SK-N-SH (cell line): ENCODE measurements at regions of chr2 and their contacts with region 1.

Region 1: GRCh38 chr2:200471324-200471848 is 38.5 kb downstream of the KCTD18 start:
- DNase-seq: peak; percentile 71
- H3K4me3 ChIP-seq: no peak overlapping the region
- H3K27ac ChIP-seq: no peak overlapping the region
- H3K4me1 ChIP-seq: peaks cover 0 to 11% of the 10 kb centered on the region in 2 experiments; a peak in 1 of 4 replicates
- H3K27me3 ChIP-seq: no peaks in the 10 kb centered on the region
- CTCF ChIP-seq: peak; percentile 61
- EP300 ChIP-seq: no peak
- RAD21 ChIP-seq: peak; percentile 87

Region 2: GRCh38 chr2:199903111-199903510 is 568.3 kb before region 1 on chr2:
- CTCF ChIA-PET with region 1: no interaction called
- POLR2A ChIA-PET with region 1: no interaction called
- DNase-seq: no peak
- H3K4me3 ChIP-seq: no peak overlapping the region
- H3K27ac ChIP-seq: no peak overlapping the region
- H3K4me1 ChIP-seq: no peaks in the 10 kb centered on the region
- H3K27me3 ChIP-seq: no peaks in the 10 kb centered on the region
- CTCF ChIP-seq: no peak
- EP300 ChIP-seq: no peak
- RAD21 ChIP-seq: no peak

Region 3: DNA sequence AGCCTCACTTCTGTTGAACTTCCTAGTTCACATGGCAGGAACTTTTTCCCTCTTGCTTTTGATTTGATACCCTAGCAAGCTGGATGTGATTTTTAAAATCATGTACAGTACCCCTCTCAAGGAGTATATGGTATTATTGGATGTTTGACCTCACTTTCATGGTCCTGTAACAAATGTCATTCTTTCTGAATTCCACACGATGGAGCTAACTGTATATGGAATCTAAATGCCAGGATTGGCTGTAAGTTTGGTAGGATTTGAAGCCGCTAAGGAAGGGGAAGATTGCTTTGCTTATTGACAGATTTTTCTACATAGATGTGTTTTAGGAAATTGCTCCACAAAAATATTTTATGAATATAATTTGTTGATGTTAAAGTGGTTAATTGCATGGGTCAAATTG is 497.7 kb before region 1 on chr2:
- CTCF ChIA-PET with region 1: interaction called, 39 read pairs
- POLR2A ChIA-PET with region 1: no interaction called
- DNase-seq: peak; percentile 40
- H3K4me3 ChIP-seq: no peak overlapping the region
- H3K27ac ChIP-seq: no peak overlapping the region
- H3K4me1 ChIP-seq: peaks cover 3 to 7% of the 10 kb centered on the region in 2 experiments; a peak in 2 of 4 replicates
- H3K27me3 ChIP-seq: no peaks in the 10 kb centered on the region
- CTCF ChIP-seq: peak; percentile 72
- EP300 ChIP-seq: no peak
- RAD21 ChIP-seq: peak; percentile 91

Region 4: DNA sequence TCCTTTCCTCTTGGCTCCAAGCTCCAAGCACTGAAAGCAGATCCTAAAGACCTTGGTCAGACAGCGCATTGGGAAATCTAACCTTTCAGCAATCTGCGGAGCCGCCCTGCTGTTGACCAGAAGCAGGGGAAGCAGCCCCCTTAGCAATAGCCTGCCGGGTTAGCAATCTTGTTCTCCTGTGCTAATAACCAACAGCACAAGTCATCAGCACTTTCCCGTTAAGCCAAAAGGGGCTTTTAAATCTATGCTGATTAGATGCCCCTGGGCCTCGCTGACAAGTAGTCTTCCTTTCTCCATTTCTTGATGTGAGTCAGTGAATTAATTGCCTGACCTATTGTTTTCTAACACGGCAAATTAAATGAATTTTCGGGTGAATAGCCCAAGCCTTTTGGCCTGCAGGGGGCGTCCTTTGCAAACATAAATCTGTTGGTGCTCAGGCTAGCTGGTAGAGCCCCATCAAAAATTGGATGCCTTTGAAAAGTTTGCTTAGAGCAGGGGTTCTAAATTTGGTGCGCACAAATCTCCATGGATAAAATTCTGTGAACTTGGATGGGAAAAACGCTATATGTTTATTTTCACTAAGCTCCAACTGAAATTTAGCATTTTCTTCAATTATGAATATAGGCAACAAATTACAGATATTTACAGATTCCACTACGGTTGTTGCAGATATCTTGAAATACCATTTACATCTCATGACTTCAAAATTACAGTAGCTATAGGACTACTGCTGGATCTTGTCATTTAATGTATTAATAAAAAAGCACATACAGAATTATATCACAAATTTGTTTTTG is 491.4 kb before region 1 on chr2:
- CTCF ChIA-PET with region 1: interaction called, 57 read pairs
- POLR2A ChIA-PET with region 1: no interaction called
- DNase-seq: peak; percentile 52
- H3K4me3 ChIP-seq: peak overlapping the region; percentile 12 to 13; a peak in 2 of 4 replicates
- H3K27ac ChIP-seq: no peak overlapping the region
- H3K4me1 ChIP-seq: peaks cover 8% of the 10 kb centered on the region in 2 experiments; a peak in 3 of 4 replicates
- H3K27me3 ChIP-seq: no peaks in the 10 kb centered on the region
- CTCF ChIP-seq: peak; percentile 98
- EP300 ChIP-seq: 0 out of 4 replicates have a peak, but pooled peaks of 1 of the 2 experiments have one; percentile 3
- RAD21 ChIP-seq: peak; percentile 93

Region 5: DNA sequence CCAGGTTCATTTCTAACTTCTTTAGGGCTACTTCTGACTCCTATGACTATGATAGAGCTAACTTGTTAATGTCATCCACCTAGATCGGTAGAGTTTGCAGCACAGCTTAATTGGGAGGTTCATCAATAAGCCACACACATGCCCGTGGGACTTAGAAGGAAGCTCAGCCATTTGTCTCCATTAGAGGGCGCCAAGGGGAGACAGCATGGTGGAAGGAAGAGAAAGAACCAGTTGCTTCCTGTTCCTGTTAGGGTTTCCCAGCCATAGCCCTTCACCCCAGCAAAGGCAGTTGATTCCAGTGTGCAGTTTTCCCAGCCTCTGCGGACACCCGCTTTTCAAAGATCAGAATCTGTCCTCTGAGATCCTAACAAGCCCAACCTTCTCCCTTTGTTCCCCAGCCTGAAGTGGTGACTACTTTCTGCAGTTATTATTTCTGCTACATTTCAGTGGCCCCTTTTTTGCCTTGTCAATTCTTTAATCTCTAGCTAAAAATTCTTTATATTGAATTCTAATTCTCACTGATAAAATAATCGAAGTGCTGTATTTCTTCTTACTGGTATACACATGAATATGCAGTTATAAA is 485.7 kb before region 1 on chr2:
- CTCF ChIA-PET with region 1: interaction called, 57 read pairs
- POLR2A ChIA-PET with region 1: interaction called, 3 read pairs
- DNase-seq: peak; percentile 38
- H3K4me3 ChIP-seq: peak overlapping the region in 1 of 2 experiments; percentile 24; a peak in 1 of 4 replicates
- H3K27ac ChIP-seq: no peak overlapping the region
- H3K4me1 ChIP-seq: no peaks in the 10 kb centered on the region; a peak in 2 of 4 replicates
- H3K27me3 ChIP-seq: no peaks in the 10 kb centered on the region
- CTCF ChIP-seq: peak; percentile 67
- EP300 ChIP-seq: no peak
- RAD21 ChIP-seq: peak; percentile 74

Region 6: GRCh38 chr2:200454927-200455801 is 16.2 kb before region 1 on chr2:
- CTCF ChIA-PET with region 1: interaction called, 20 read pairs
- POLR2A ChIA-PET with region 1: no interaction called
- DNase-seq: no peak
- H3K4me3 ChIP-seq: no peak overlapping the region
- H3K27ac ChIP-seq: peak overlapping the region in 1 of 2 experiments; percentile 16; a peak in 1 of 4 replicates
- H3K4me1 ChIP-seq: peaks cover 14 to 15% of the 10 kb centered on the region in 2 experiments; a peak in 3 of 4 replicates
- H3K27me3 ChIP-seq: no peaks in the 10 kb centered on the region
- CTCF ChIP-seq: no peak
- EP300 ChIP-seq: no peak; a peak in 1 of 4 replicates
- RAD21 ChIP-seq: no peak

Region 7: DNA sequence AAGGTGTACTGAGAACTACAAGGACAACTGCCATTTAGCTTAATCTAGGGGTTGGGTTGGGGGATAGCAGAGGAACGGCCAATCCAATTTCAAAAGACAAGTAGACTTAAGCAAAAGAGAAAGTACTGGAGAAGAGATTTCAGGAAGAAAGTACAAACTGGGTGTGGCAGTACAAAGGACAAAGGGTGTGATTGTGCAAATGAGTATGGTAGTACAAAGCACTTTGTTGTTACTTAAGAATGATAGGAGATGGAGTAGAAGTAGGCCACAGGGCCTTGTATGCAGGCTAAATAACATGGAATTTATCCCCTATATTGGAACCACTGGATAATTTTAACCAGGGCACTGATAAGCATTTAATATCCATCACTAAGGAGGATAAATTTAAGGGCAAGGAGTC is 496.8 kb after region 1 on chr2:
- CTCF ChIA-PET with region 1: no interaction called
- POLR2A ChIA-PET with region 1: no interaction called
- DNase-seq: no peak
- H3K4me3 ChIP-seq: no peak overlapping the region
- H3K27ac ChIP-seq: no peak overlapping the region
- H3K4me1 ChIP-seq: peaks cover 3 to 5% of the 10 kb centered on the region in 2 experiments; a peak in 3 of 4 replicates
- H3K27me3 ChIP-seq: no peaks in the 10 kb centered on the region
- CTCF ChIP-seq: no peak
- EP300 ChIP-seq: no peak
- RAD21 ChIP-seq: no peak